PC-9 (cell line): ENCODE measurements at regions of chr7 and their contacts with region 1.

Region 1: DNA sequence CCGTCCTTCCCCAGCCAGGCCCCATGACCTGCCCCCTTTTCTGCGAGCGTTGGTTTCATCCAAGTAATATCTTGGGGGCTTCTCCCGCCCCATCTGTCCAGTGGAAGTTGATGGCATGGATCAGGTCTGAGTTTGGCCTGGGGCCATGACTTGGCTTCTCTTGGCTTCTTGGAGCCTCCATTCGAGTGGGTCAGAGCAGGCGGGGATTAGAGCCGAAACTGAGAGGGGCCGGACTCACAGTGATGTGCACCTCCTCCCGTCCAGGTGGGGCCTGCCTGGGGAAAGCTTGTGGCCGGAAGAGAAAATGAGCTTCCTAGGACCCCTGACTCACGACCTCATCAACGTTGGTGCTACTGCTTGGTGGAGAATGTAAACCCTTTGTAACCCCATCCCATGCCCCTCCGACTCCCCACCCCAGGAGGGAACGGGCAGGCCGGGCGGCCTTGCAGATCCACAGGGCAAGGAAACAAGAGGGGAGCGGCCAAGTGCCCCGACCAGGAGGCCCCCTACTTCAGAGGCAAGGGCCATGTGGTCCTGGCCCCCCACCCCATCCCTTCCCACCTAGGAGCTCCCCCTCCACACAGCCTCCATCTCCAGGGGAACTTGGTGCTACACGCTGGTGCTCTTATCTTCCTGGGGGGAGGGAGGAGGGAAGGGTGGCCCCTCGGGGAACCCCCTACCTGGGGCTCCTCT is 15.1 kb upstream of the LIMK1 start:
- DNase-seq: no peak
- H3K4me3 ChIP-seq: no peak overlapping the region
- H3K27ac ChIP-seq: no peak overlapping the region
- H3K4me1 ChIP-seq: no peaks in the 10 kb centered on the region
- H3K27me3 ChIP-seq: no peaks in the 10 kb centered on the region
- CTCF ChIP-seq: no peak

Region 2: GRCh38 chr7:73852235-73852870 is 216.2 kb before region 1 on chr7:
- CTCF ChIA-PET with region 1: no interaction called
- POLR2A ChIA-PET with region 1: no interaction called
- intact Hi-C with region 1: no loop called
- DNase-seq: no peak
- H3K4me3 ChIP-seq: no peak overlapping the region
- H3K27ac ChIP-seq: peak overlapping the region; percentile 99
- H3K4me1 ChIP-seq: peaks cover 57% of the 10 kb centered on the region
- H3K27me3 ChIP-seq: no peaks in the 10 kb centered on the region
- CTCF ChIP-seq: no peak

Region 3: GRCh38 chr7:74094224-74095101 is 25.9 kb after region 1 on chr7:
- CTCF ChIA-PET with region 1: interaction called, 8 read pairs
- POLR2A ChIA-PET with region 1: no interaction called
- intact Hi-C with region 1: loop called (anchors 1 kb)
- DNase-seq: peak; percentile 92 to 94
- H3K4me3 ChIP-seq: peak overlapping the region; percentile 41; the same call in 1 of the 2 replicates
- H3K27ac ChIP-seq: peak overlapping the region; percentile 78
- H3K4me1 ChIP-seq: peaks cover 38% of the 10 kb centered on the region
- H3K27me3 ChIP-seq: no peaks in the 10 kb centered on the region
- CTCF ChIP-seq: no peak

Region 4: GRCh38 chr7:74104703-74105102 is 36.2 kb after region 1 on chr7:
- CTCF ChIA-PET with region 1: no interaction called
- POLR2A ChIA-PET with region 1: no interaction called
- intact Hi-C with region 1: loop called (anchors 2 kb)
- DNase-seq: peak; percentile 87 to 92
- H3K4me3 ChIP-seq: no peak overlapping the region
- H3K27ac ChIP-seq: peak overlapping the region; percentile 73
- H3K4me1 ChIP-seq: peaks cover 27% of the 10 kb centered on the region
- H3K27me3 ChIP-seq: no peaks in the 10 kb centered on the region
- CTCF ChIP-seq: no peak

Region 5: GRCh38 chr7:74183613-74184450 is 115.3 kb after region 1 on chr7:
- CTCF ChIA-PET with region 1: interaction called, 4 read pairs
- POLR2A ChIA-PET with region 1: no interaction called
- intact Hi-C with region 1: loop called (anchors 5 kb)
- DNase-seq: peak; percentile 36 to 67
- H3K4me3 ChIP-seq: no peak overlapping the region
- H3K27ac ChIP-seq: peak overlapping the region; percentile 30; the same call in 1 of the 2 replicates
- H3K4me1 ChIP-seq: peaks cover 35% of the 10 kb centered on the region
- H3K27me3 ChIP-seq: no peaks in the 10 kb centered on the region
- CTCF ChIP-seq: peak; percentile 59; the same call in 1 of the 2 replicates

Region 6: GRCh38 chr7:74197449-74198124 is 129.0 kb after region 1 on chr7:
- CTCF ChIA-PET with region 1: interaction called, 11 read pairs
- POLR2A ChIA-PET with region 1: interaction called, 17 read pairs
- intact Hi-C with region 1: no loop called
- DNase-seq: no peak
- H3K4me3 ChIP-seq: no peak overlapping the region
- H3K27ac ChIP-seq: no peak overlapping the region
- H3K4me1 ChIP-seq: peaks cover 8% of the 10 kb centered on the region; the same call in 1 of the 2 replicates
- H3K27me3 ChIP-seq: no peaks in the 10 kb centered on the region
- CTCF ChIP-seq: no peak

Region 7: DNA sequence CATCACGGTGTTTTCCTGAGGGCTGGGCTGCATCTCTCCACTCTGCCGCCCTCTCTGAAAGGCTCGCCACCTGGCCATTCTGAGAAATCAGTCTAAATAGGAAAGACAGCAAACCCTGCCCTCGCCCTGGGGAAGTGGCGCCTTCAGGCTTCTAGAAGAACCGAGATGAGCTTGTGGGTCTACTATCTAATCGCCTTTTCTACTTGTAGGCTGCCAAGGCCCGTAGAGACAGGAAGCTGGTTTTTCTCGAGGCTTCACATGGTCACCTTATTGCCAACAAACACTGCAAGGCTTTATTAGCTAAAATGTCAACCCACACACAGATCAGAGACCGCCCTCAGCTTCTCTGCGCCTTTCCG is 162.7 kb after region 1 on chr7:
- CTCF ChIA-PET with region 1: no interaction called
- POLR2A ChIA-PET with region 1: no interaction called
- intact Hi-C with region 1: no loop called
- DNase-seq: no peak
- H3K4me3 ChIP-seq: no peak overlapping the region
- H3K27ac ChIP-seq: no peak overlapping the region
- H3K4me1 ChIP-seq: no peaks in the 10 kb centered on the region
- H3K27me3 ChIP-seq: no peaks in the 10 kb centered on the region
- CTCF ChIP-seq: no peak

Region 8: GRCh38 chr7:74254129-74254857 is 185.8 kb after region 1 on chr7 and contains the start of gene RFC2:
- CTCF ChIA-PET with region 1: no interaction called
- POLR2A ChIA-PET with region 1: no interaction called
- intact Hi-C with region 1: loop called (anchors 5 kb)
- DNase-seq: peak; percentile 88 to 99
- H3K4me3 ChIP-seq: peak within 1 kb of the TSS; percentile 92
- H3K27ac ChIP-seq: peak within 1 kb of the TSS; percentile 67
- H3K4me1 ChIP-seq: peaks cover 17% of the 10 kb centered on the region
- H3K27me3 ChIP-seq: no peaks in the 10 kb centered on the region
- CTCF ChIP-seq: no peak
- total RNA-seq, gene RFC2: 65.5 and 75.7 TPM in 2 replicates

Region 9: GRCh38 chr7:74401137-74401859 is 332.8 kb after region 1 on chr7:
- CTCF ChIA-PET with region 1: interaction called, 9 read pairs
- POLR2A ChIA-PET with region 1: no interaction called
- intact Hi-C with region 1: loop called (anchors 5 kb)
- DNase-seq: peak; percentile 51 to 80
- H3K4me3 ChIP-seq: no peak overlapping the region
- H3K27ac ChIP-seq: no peak overlapping the region
- H3K4me1 ChIP-seq: no peaks in the 10 kb centered on the region
- H3K27me3 ChIP-seq: no peaks in the 10 kb centered on the region
- CTCF ChIP-seq: peak; percentile 98